ENCODE measurements at regions of chr3 and their contacts with region 1.

Region 1: DNA sequence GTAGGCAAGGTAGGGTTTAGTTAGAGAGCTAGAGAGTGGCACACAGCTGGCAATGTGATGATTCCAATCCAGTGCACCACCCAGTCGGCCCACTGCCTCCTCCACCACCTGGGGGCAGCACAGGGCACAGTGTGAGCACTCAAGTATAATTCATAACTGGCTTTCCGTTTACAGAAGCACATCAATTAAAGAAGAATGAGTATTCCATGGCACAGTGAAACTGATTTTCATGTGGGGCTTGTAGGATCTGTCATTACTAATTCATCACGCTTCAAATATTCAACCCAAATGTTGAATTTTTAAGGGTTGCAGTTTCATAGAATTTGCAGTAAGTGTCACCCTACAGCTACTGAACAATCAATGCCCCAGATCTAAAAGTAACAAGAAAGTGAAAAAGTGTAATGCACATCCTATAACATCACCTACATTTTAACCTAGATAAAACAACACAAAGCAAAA is 149.9 kb downstream of the IGSF11 start:
- DNase-seq: peak; percentile 89
- H3K4me3 Mint-ChIP-seq: no peak overlapping the region
- H3K27ac Mint-ChIP-seq: no peak overlapping the region
- H3K4me1 Mint-ChIP-seq: no peaks in the 10 kb centered on the region
- H3K27me3 Mint-ChIP-seq: peaks cover 8% of the 10 kb centered on the region

Region 2: GRCh38 chr3:118949113-118949760 is 64.5 kb after region 1 on chr3:
- CTCF ChIA-PET with region 1: interaction called, 16 read pairs
- intact Hi-C with region 1: loop called (anchors 2 kb)
- DNase-seq: no peak
- H3K4me3 Mint-ChIP-seq: no peak overlapping the region
- H3K27ac Mint-ChIP-seq: peak overlapping the region; percentile 55
- H3K4me1 Mint-ChIP-seq: peaks cover 45% of the 10 kb centered on the region
- H3K27me3 Mint-ChIP-seq: no peaks in the 10 kb centered on the region

Region 3: GRCh38 chr3:119034256-119035013 is 149.7 kb after region 1 on chr3 and contains the start of gene IGSF11:
- CTCF ChIA-PET with region 1: interaction called, 309 read pairs
- intact Hi-C with region 1: loop called (anchors 1 kb)
- DNase-seq: peak; percentile 67
- H3K4me3 Mint-ChIP-seq: peak within 1 kb of the TSS; percentile 82
- H3K27ac Mint-ChIP-seq: no peak within 1 kb of the TSS
- H3K4me1 Mint-ChIP-seq: peaks cover 6% of the 10 kb centered on the region
- H3K27me3 Mint-ChIP-seq: peaks cover 38% of the 10 kb centered on the region
- total RNA-seq, gene IGSF11: 0.07 to 0.12 TPM

Region 4: GRCh38 chr3:119069725-119070124 is 184.9 kb after region 1 on chr3:
- CTCF ChIA-PET with region 1: interaction called, 11 read pairs
- intact Hi-C with region 1: no loop called
- DNase-seq: no peak
- H3K4me3 Mint-ChIP-seq: no peak overlapping the region
- H3K27ac Mint-ChIP-seq: no peak overlapping the region
- H3K4me1 Mint-ChIP-seq: no peaks in the 10 kb centered on the region
- H3K27me3 Mint-ChIP-seq: peaks cover 6% of the 10 kb centered on the region

Region 5: DNA sequence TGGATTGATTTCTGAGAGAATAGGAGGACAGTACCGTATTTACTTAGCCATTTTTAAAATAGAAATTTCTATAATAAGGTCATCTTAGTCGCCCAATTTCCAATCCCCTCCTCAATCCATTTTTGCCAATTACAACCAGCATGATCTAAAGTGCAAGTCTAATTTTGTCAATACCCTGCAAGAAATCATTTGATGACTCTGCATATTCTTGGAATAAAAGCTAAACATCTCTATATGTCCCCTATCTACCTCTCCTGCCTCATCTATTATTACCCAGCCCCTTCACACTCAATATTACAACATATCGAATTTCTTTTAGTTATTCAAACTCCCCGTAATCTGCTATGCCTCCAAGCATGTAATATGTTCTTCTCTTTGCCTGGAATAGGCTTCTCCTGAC is 219.3 kb after region 1 on chr3:
- CTCF ChIA-PET with region 1: interaction called, 261 read pairs
- intact Hi-C with region 1: no loop called
- DNase-seq: no peak
- H3K4me3 Mint-ChIP-seq: no peak overlapping the region
- H3K27ac Mint-ChIP-seq: no peak overlapping the region
- H3K4me1 Mint-ChIP-seq: no peaks in the 10 kb centered on the region
- H3K27me3 Mint-ChIP-seq: no peaks in the 10 kb centered on the region

Region 6: GRCh38 chr3:119352849-119353502 is 468.2 kb after region 1 on chr3:
- CTCF ChIA-PET with region 1: interaction called, 9 read pairs
- intact Hi-C with region 1: loop called (anchors 1 kb)
- DNase-seq: peak; percentile 13
- H3K4me3 Mint-ChIP-seq: no peak overlapping the region
- H3K27ac Mint-ChIP-seq: peak overlapping the region; percentile 43
- H3K4me1 Mint-ChIP-seq: peaks cover 30% of the 10 kb centered on the region
- H3K27me3 Mint-ChIP-seq: no peaks in the 10 kb centered on the region